Esophagus squamous epithelium (tissue), 5 donors: ENCODE measurements at regions of chr13 and their contacts with region 1.

Region 1: GRCh38 chr13:36858290-36858689 is 39.3 kb downstream of the RFXAP start:
- DNase-seq: no peak
- H3K4me3 ChIP-seq: no peak overlapping the region
- H3K27ac ChIP-seq: no peak overlapping the region
- H3K4me1 ChIP-seq: peaks cover 0 to 3% (median 0%) of the 10 kb centered on the region in 3 donors
- H3K27me3 ChIP-seq: no peaks in the 10 kb centered on the region
- CTCF ChIP-seq: peak in 5 of 6 experiments; percentile 25 to 54 (median 39)
- POLR2A ChIP-seq: no peak

Region 2: GRCh38 chr13:36601186-36601585 is 257.1 kb before region 1 on chr13:
- intact Hi-C with region 1: no loop called
- DNase-seq: no peak
- H3K4me3 ChIP-seq: no peak overlapping the region
- H3K27ac ChIP-seq: no peak overlapping the region
- H3K4me1 ChIP-seq: no peaks in the 10 kb centered on the region
- H3K27me3 ChIP-seq: no peaks in the 10 kb centered on the region
- CTCF ChIP-seq: no peak
- POLR2A ChIP-seq: no peak

Region 3: GRCh38 chr13:36973621-36974295 is 115.5 kb after region 1 on chr13:
- intact Hi-C with region 1: loop called (anchors 10 kb)
- DNase-seq: no peak
- H3K4me3 ChIP-seq: no peak overlapping the region
- H3K27ac ChIP-seq: no peak overlapping the region
- H3K4me1 ChIP-seq: no peaks in the 10 kb centered on the region
- H3K27me3 ChIP-seq: no peaks in the 10 kb centered on the region
- CTCF ChIP-seq: no peak
- POLR2A ChIP-seq: no peak